ENCODE measurements at regions of chr10 and their contacts with region 1.

Region 1: GRCh38 chr10:79266543-79267312 is 80.5 kb upstream of the PPIF start:
- DNase-seq: peak in 3 of 10 donors; percentile 47 to 81 (median 62)
- H3K4me3 ChIP-seq: peak overlapping the region in 2 of 59 donors; percentile 12 to 16
- H3K27ac ChIP-seq: peak overlapping the region; percentile 6 to 97 (median 85)
- H3K27me3 ChIP-seq: no peaks in the 10 kb centered on the region
- CTCF ChIP-seq: no peak

Region 2: DNA sequence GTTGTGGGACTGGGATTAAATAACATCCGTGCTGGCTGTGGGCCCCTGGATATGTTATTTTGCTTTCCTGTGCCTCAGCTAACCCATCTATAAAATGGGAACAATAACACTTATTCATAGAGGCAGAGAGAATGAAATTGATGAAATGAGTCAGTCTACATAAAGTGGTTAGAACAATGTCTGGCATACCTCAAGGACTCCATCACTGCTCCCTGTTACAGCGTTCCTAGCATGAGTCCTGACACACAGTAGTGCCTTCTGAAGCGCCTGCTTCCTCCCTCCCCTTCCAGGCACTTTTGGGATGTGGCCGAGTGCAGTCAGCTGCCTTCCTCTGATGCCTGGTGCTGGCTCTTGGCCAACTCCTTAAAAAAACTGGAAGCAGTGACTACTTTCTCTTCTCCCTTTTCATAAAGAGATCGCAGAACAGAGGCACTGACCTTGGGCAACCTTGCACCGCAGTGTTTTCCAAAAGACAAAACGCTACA is 306.4 kb before region 1 on chr10:
- intact Hi-C with region 1: loop called in 1 of 2 experiments (anchors 10 kb)
- DNase-seq: peak in 4 of 10 donors; percentile 37 to 69 (median 54)
- H3K4me3 ChIP-seq: no peak overlapping the region
- H3K27ac ChIP-seq: peak overlapping the region in 3 of 59 donors; percentile 10 to 38 (median 38)
- H3K27me3 ChIP-seq: no peaks in the 10 kb centered on the region
- CTCF ChIP-seq: no peak

Region 3: GRCh38 chr10:79206300-79207095 is 60.2 kb before region 1 on chr10:
- intact Hi-C with region 1: loop called in 1 of 2 experiments (anchors 5 kb)
- DNase-seq: peak in 9 of 10 donors; percentile 64 to 78 (median 71)
- H3K4me3 ChIP-seq: no peak overlapping the region
- H3K27ac ChIP-seq: peak overlapping the region in 26 of 59 donors; percentile 3 to 80 (median 31)
- H3K27me3 ChIP-seq: no peaks in the 10 kb centered on the region
- CTCF ChIP-seq: no peak

Region 4: DNA sequence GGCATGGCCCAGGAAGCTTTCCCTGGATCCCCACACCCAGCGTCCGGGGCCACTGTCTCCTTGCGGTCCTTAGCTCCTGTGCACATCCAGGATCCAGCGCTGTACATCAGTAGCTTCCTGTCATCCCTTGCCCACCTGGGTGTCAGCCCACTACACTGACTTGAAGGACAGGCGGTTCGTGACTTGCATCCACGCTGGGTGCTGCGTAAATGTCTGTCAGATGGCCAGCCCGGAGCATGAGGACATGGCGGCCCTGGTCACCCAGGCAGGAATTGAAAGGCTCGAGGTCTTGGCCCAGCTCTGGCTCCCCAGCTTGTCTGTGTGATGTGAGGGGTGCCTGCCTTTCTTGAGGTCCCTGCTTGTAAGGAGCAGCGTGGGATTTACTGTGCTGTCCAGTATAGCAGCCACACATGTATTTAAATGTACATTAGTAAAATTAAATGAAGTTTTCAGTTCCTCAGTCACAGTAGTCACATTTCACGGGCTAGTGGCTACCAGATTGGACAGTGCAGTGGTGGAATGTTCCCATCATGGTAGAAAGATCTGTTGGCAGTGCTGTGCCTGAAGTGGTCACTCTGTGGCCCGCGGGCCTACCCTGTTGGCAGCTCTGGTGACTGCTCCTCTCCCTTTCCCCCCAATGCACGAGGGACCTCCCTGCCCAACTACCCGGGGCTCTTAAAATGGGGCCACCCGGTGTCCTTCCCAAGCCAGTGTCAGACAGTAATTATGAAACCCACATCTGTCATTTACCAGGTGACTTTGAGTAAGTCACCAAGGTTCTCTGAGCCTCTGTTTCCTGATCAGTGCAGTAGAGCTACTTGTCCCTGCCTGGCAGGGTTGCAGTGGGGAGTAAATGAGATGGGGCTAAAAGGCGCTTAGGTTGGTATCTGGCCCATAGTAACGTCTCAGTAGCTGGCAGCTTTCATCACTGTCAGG is 17.3 kb before region 1 on chr10:
- intact Hi-C with region 1: no loop called
- DNase-seq: no peak
- H3K4me3 ChIP-seq: no peak overlapping the region
- H3K27ac ChIP-seq: peak overlapping the region in 56 of 59 donors; percentile 18 to 97 (median 92)
- H3K27me3 ChIP-seq: no peaks in the 10 kb centered on the region
- CTCF ChIP-seq: no peak